ENCODE measurements at regions of chr10 and their contacts with region 1.

Region 1: DNA sequence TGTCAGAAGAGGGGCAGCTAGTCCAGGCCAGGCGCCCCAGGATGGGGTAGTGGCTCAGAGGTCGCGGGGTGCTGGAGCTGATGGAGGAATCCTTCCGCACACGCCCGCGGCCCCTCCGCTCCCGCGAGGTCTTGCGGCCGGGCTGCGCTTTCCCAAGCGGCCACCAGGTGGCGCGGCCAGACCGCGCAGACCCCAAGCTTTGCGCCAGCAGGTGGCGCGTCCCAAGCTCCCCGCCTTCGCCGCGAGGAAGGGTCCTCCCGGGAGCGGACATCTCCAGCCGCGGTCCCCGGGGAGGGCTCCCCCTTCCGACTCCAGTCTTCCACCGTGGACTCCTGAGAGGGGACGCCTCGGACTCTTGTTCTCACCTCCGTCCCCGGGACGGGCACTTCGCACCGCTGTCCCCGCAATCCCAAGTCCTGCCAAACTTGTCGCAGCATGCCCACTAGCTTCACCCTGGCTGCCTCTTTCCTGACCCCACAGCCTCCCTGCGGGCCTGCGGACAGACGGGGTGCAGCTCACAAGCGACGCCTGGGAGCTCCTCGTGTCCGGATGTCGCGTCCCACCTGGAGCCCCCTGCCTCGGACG is 19.4 kb downstream of the KCNK18 start:
- DNase-seq: peak; percentile 59 to 93
- H3K4me3 ChIP-seq: peak overlapping the region; percentile 29 to 81 (median 70)
- H3K27ac ChIP-seq: no peak overlapping the region
- H3K4me1 ChIP-seq: peaks cover 0 to 7% (median 7%) of the 10 kb centered on the region in 4 experiments; a peak in 5 of 7 replicates
- H3K27me3 ChIP-seq: peaks cover 7 to 29% (median 25%) of the 10 kb centered on the region in 4 experiments
- CTCF ChIP-seq: peak; percentile 99 to 100 (median 99)
- EP300 ChIP-seq: peak in 1 of 2 experiments; percentile 38; a peak in 1 of 3 replicates
- POLR2A ChIP-seq: no peak
- RAD21 ChIP-seq: peak; percentile 94 to 96

Region 2: DNA sequence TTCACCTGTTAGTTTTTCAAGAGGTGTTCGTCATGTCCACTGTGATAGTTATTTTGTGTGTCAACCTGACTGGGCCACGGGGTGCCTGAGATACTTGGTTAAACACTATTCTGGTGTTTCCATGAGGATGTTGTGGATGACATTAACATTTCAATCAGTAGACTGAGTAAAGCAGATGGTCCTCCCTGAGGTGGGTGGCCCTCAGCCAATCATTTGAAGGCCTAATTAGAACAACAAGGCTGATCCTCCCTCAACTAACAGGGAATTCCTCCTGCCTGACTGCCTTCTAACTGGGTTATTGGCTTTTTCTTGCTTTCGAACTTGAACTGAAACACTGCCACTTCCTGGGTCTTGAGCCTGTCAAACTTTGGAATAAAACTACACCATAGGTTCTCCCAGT is 291.6 kb before region 1 on chr10:
- CTCF ChIA-PET with region 1: no interaction called
- POLR2A ChIA-PET with region 1: no interaction called
- DNase-seq: no peak
- H3K4me3 ChIP-seq: no peak overlapping the region
- H3K27ac ChIP-seq: no peak overlapping the region
- H3K4me1 ChIP-seq: peaks cover 0 to 4% (median 0%) of the 10 kb centered on the region in 4 experiments; a peak in 1 of 7 replicates
- H3K27me3 ChIP-seq: no peaks in the 10 kb centered on the region
- CTCF ChIP-seq: no peak
- EP300 ChIP-seq: no peak
- POLR2A ChIP-seq: no peak
- RAD21 ChIP-seq: no peak

Region 3: DNA sequence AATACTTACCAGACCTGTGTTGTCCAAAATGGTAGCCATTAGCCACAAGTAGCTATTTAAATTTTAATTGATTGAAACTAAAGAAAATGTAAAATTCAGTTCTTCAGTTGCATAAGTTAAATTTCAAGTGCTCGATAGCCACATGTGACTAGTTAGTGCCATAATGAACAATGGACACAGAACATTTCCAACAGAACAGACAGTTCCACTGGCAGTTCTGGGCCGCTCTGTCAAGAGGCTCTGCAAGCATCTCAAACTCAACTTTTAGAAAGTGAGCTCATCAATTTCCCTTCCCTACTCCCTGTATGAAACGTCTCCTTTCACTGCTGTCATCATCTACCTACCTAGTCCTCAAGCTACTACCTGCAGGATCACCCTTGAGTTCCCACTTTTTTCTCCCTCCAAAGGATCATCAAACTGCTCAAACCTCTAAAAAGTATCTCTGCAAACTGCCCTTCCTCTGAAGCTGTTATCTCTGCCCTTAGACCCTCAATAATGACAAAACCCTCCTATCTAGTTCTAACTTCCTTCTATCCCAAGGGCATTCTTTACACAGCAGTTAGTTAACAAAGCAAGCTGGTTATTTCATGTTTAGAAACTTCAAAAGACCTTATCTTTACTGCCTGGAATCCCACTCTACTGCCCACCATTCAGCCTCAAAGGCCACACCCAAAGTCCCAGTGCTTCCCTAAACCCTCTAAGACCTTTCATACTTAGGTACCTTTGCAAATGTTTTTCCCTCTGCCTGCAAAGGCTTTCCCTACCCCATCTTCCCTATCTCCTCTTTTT is 232.3 kb before region 1 on chr10:
- CTCF ChIA-PET with region 1: no interaction called
- POLR2A ChIA-PET with region 1: no interaction called
- DNase-seq: no peak
- H3K4me3 ChIP-seq: no peak overlapping the region
- H3K27ac ChIP-seq: no peak overlapping the region
- H3K4me1 ChIP-seq: peaks cover 0 to 5% (median 0%) of the 10 kb centered on the region in 4 experiments; a peak in 4 of 7 replicates
- H3K27me3 ChIP-seq: no peaks in the 10 kb centered on the region
- CTCF ChIP-seq: no peak
- EP300 ChIP-seq: no peak
- POLR2A ChIP-seq: no peak
- RAD21 ChIP-seq: no peak

Region 4: DNA sequence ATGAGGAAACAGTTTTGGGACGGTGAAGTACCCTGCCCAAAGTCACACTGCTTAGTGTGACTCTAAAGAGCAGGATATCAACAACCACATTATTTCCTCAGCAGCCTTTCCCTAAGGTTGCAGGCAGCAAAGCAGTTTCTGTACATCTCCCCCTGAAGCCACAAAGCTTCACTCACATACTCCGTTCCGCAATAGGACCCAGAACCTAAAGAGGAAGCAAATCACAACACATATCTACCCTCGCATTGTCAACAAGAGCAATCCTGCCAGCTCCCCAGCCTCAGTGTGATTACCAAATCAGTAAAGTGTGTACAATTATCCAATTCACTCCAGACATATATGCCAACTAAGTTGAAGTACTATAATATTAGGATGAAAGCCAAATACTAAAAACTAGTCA is 109.5 kb before region 1 on chr10:
- CTCF ChIA-PET with region 1: no interaction called
- POLR2A ChIA-PET with region 1: no interaction called
- DNase-seq: no peak
- H3K4me3 ChIP-seq: no peak overlapping the region
- H3K27ac ChIP-seq: no peak overlapping the region
- H3K4me1 ChIP-seq: peaks cover 0 to 3% (median 0%) of the 10 kb centered on the region in 4 experiments; a peak in 1 of 7 replicates
- H3K27me3 ChIP-seq: no peaks in the 10 kb centered on the region; a peak in 1 of 7 replicates
- CTCF ChIP-seq: no peak
- EP300 ChIP-seq: no peak
- POLR2A ChIP-seq: no peak
- RAD21 ChIP-seq: no peak

Region 5: GRCh38 chr10:117198088-117198487 is 18.6 kb before region 1 on chr10:
- CTCF ChIA-PET with region 1: interaction called, 13 read pairs
- POLR2A ChIA-PET with region 1: no interaction called
- DNase-seq: no peak
- H3K4me3 ChIP-seq: no peak overlapping the region
- H3K27ac ChIP-seq: no peak overlapping the region
- H3K4me1 ChIP-seq: no peaks in the 10 kb centered on the region; a peak in 2 of 7 replicates
- H3K27me3 ChIP-seq: no peaks in the 10 kb centered on the region
- CTCF ChIP-seq: no peak
- EP300 ChIP-seq: no peak
- POLR2A ChIP-seq: no peak
- RAD21 ChIP-seq: no peak

Region 6: GRCh38 chr10:117226824-117227451 is 10.2 kb after region 1 on chr10:
- CTCF ChIA-PET with region 1: interaction called, 35 read pairs
- POLR2A ChIA-PET with region 1: interaction called, 3 read pairs
- DNase-seq: peak in 1 of 2 experiments; percentile 65
- H3K4me3 ChIP-seq: no peak overlapping the region
- H3K27ac ChIP-seq: no peak overlapping the region
- H3K4me1 ChIP-seq: no peaks in the 10 kb centered on the region
- H3K27me3 ChIP-seq: no peaks in the 10 kb centered on the region
- CTCF ChIP-seq: peak; percentile 69 to 90 (median 80)
- EP300 ChIP-seq: no peak
- POLR2A ChIP-seq: no peak
- RAD21 ChIP-seq: peak; percentile 85 to 87

Region 7: DNA sequence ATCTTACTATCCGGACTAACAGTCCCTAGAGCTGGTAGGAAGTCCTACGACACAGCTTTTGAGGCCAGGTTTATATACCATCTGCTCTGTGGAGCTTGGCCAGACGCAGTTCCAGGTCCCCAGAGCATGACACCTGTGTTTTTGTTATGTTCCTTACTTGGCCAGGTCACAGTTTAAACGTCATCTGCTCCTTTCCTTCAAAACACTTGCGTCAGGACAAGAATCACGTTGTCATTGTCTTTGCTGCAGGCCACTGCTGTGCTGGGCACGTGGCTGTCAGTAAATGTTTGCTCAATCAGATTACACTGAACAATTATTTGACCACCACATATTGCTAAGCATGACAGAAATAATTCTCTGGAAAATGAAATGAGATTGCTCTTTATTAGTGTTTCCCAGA is 48.1 kb after region 1 on chr10:
- CTCF ChIA-PET with region 1: interaction called, 16 read pairs
- POLR2A ChIA-PET with region 1: no interaction called
- DNase-seq: no peak
- H3K4me3 ChIP-seq: no peak overlapping the region
- H3K27ac ChIP-seq: no peak overlapping the region
- H3K4me1 ChIP-seq: peaks cover 0 to 7% (median 3%) of the 10 kb centered on the region in 4 experiments; a peak in 4 of 7 replicates
- H3K27me3 ChIP-seq: no peaks in the 10 kb centered on the region
- CTCF ChIP-seq: no peak
- EP300 ChIP-seq: no peak
- POLR2A ChIP-seq: no peak
- RAD21 ChIP-seq: no peak

Region 8: DNA sequence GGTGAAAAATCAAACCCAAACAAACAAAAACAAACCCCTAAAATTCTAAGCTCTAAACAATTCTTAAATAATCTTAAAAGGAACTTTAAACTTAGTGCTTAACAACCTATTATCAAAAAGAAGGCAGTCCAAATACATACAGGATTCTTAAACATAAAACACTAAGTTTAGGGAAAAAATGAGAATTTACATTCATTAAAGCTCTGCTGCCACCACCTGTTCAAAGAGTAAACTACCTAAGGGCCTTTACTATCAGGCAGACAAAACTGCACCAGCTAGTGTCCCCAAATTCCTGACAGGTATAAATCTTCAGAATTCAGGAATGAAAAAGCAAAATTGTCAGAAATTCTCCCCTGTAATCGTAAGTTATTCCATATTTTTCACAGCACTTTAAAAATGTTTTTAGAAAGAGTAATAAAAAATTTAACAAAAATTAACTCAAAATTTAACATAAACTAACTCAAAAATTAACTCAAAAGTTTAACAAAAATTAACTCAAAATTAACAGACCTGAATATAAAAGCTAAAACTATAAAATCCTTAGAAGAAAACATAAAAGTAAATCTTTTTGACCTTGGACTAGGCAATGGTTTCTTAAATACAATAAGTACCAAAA is 103.5 kb after region 1 on chr10:
- CTCF ChIA-PET with region 1: interaction called, 118 read pairs
- POLR2A ChIA-PET with region 1: no interaction called
- DNase-seq: no peak
- H3K4me3 ChIP-seq: no peak overlapping the region
- H3K27ac ChIP-seq: no peak overlapping the region
- H3K4me1 ChIP-seq: peaks cover 0 to 14% (median 3%) of the 10 kb centered on the region in 4 experiments; a peak in 4 of 7 replicates
- H3K27me3 ChIP-seq: no peaks in the 10 kb centered on the region
- CTCF ChIP-seq: peak in 2 of 3 experiments; percentile 56 to 71; a peak in 3 of 4 replicates
- EP300 ChIP-seq: no peak
- POLR2A ChIP-seq: no peak
- RAD21 ChIP-seq: peak; percentile 69 to 79

Region 9: DNA sequence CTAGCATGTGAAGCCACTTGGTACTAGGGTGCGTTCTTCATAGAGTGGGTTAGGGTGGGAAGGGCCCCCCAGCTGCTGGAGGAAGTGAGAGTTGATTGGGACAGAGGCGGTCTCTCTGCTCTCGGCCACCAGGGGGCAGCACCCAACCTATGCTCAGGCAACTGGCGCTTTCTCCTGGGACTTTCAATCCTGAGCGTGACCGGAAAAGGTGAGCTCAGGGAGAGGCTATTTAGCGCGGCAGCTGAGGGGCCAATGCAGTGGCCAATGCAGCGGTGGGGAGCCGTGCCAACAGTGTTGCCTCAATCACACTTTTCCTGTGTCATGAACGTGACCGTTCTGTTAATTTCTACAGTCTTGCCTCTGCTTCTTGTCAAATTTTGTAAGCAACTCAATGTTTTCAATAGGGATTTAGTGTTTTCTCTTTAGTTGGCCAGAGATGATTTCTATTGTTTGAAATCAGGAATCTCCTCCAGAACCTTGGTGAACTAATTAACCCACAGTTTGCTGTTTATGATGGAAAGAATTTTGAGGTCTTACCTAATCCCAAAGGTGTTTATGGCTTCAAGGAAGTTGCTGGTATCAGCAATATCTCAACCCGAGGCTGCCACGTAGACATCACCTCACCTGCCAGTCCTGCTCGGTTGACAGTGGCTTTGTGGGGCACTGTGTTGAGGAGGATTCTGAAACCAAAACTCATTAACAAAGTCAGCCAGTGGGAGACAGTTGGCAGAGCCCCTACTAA is 226.4 kb after region 1 on chr10:
- CTCF ChIA-PET with region 1: interaction called, 11 read pairs
- POLR2A ChIA-PET with region 1: no interaction called
- DNase-seq: peak; percentile 46 to 93
- H3K4me3 ChIP-seq: no peak overlapping the region
- H3K27ac ChIP-seq: no peak overlapping the region
- H3K4me1 ChIP-seq: no peaks in the 10 kb centered on the region; a peak in 1 of 7 replicates
- H3K27me3 ChIP-seq: no peaks in the 10 kb centered on the region
- CTCF ChIP-seq: peak; percentile 85 to 92 (median 88)
- EP300 ChIP-seq: no peak
- POLR2A ChIP-seq: no peak
- RAD21 ChIP-seq: peak; percentile 69 to 81

Region 10: GRCh38 chr10:117461766-117462423 is 245.2 kb after region 1 on chr10:
- CTCF ChIA-PET with region 1: interaction called, 13 read pairs
- POLR2A ChIA-PET with region 1: no interaction called
- DNase-seq: no peak
- H3K4me3 ChIP-seq: no peak overlapping the region
- H3K27ac ChIP-seq: no peak overlapping the region
- H3K4me1 ChIP-seq: peaks cover 0 to 13% (median 5%) of the 10 kb centered on the region in 4 experiments; a peak in 5 of 7 replicates
- H3K27me3 ChIP-seq: no peaks in the 10 kb centered on the region
- CTCF ChIP-seq: no peak
- EP300 ChIP-seq: no peak
- POLR2A ChIP-seq: no peak
- RAD21 ChIP-seq: no peak

Measured in H1 (cell line).